HCT116 (cell line): ENCODE measurements at regions of chr19 and their contacts with region 1.

Region 1: GRCh38 chr19:7340959-7341837 is 7.5 kb upstream of the ARHGEF18 start:
- DNase-seq: peak; percentile 67
- ATAC-seq: peak; percentile 75
- H3K4me3 ChIP-seq: peak overlapping the region in 1 of 2 experiments; percentile 20; a peak in 2 of 4 replicates
- H3K27ac ChIP-seq: no peak overlapping the region
- H3K4me1 ChIP-seq: peaks cover 2 to 20% of the 10 kb centered on the region in 2 experiments; a peak in 3 of 4 replicates
- H3K27me3 ChIP-seq: no peaks in the 10 kb centered on the region
- CTCF ChIP-seq: peak; percentile 89 to 95 (median 94)
- POLR2A ChIP-seq: no peak
- RAD21 ChIP-seq: peak; percentile 98

Region 2: GRCh38 chr19:6947745-6948144 is 393.5 kb before region 1 on chr19:
- CTCF ChIA-PET with region 1: no interaction called
- POLR2A ChIA-PET with region 1: no interaction called
- RAD21 ChIA-PET with region 1: no interaction called
- intact Hi-C with region 1: loop called (anchors 10 kb)
- DNase-seq: peak; percentile 23
- ATAC-seq: peak; percentile 70
- H3K4me3 ChIP-seq: no peak overlapping the region
- H3K27ac ChIP-seq: no peak overlapping the region
- H3K4me1 ChIP-seq: peaks cover 0 to 7% of the 10 kb centered on the region in 2 experiments; a peak in 2 of 4 replicates
- H3K27me3 ChIP-seq: no peaks in the 10 kb centered on the region
- CTCF ChIP-seq: no peak
- POLR2A ChIP-seq: no peak
- RAD21 ChIP-seq: no peak

Region 3: DNA sequence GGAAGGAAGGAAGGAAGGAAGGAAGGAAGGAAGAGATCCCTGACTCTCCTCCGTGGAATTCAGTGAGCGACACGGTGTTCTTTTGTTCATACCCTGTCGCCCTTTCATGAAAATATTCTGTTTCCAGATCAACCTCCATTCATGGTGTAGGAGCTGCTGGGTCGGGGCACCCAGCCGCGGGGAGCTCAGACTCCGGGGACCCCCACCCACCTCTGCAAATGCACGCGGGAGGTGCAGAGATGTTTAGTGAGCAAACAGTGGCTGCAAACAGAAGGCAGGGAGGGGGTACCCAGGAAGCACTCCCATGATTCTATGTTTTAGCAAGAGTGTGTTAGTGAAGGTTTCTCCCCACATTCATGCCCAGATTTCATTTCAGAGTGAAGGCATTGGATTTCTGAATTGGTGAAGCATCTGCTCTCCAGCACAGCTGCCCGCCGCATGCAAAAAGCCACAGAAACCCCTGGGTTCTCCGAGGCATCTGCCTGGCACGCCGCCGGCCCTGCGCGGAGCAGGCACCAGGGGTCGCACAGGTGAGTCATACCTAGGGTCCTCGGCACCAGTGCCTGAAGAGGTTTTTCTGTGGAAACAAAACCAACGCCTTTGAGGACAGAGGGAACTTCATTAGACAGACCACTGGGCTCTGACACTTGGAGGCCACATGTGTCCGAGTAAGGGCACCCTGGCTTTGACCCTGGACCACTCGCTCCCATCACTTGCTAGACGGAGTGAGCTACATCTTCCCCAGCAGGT is 191.1 kb before region 1 on chr19:
- CTCF ChIA-PET with region 1: interaction called, 6 read pairs
- POLR2A ChIA-PET with region 1: no interaction called
- RAD21 ChIA-PET with region 1: no interaction called
- intact Hi-C with region 1: loop called (anchors 1 kb)
- DNase-seq: no peak
- ATAC-seq: no peak
- H3K4me3 ChIP-seq: no peak overlapping the region
- H3K27ac ChIP-seq: no peak overlapping the region
- H3K4me1 ChIP-seq: no peaks in the 10 kb centered on the region
- H3K27me3 ChIP-seq: no peaks in the 10 kb centered on the region
- CTCF ChIP-seq: no peak
- POLR2A ChIP-seq: no peak
- RAD21 ChIP-seq: no peak